Activated B cell treated with CpG ODN at 0.5 μM for 24 hours (primary cell): ENCODE measurements at regions of chr3 and their contacts with region 1.

Region 1: GRCh38 chr3:33372218-33373081 is 67.8 kb downstream of the UBP1 start:
- DNase-seq: no peak
- ATAC-seq: peak; percentile 54
- H3K4me3 Mint-ChIP-seq: no peak overlapping the region
- H3K27ac Mint-ChIP-seq: no peak overlapping the region
- H3K4me1 Mint-ChIP-seq: peaks cover 2% of the 10 kb centered on the region
- H3K27me3 Mint-ChIP-seq: peaks cover 4% of the 10 kb centered on the region
- CTCF ChIP-seq: peak; percentile 80

Region 2: DNA sequence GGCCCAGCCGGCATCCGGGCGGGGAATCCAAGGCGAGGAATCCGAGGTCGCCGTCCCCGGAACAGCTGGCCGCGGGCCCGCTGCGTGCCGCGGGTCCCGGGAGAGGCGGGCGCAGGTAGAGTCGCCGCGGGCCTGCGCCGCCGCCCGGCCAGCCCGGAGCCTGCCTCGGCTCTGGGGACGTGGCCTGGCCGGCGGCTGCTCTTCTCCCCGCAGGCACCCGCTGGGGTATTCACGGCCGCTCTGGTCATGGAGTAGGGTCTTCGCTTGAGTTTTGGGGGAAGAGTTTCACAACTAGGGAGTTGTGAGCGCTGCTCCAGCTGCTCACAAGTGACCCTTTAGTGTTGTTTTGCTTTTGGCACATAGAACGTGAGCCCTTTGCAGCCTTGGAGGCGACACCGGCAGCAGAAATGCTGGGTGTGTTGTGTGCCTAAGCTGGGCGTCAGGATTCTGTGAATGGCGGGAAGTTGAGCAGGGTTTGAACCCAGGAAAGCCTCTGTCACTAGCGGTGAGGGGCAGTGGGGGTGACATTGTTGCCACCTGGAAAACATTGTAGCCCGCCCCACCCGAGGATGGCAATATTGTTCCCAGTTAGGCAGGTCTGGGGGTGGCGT is 550.7 kb before region 1 on chr3:
- CTCF ChIA-PET with region 1: no interaction called
- POLR2A ChIA-PET with region 1: no interaction called
- intact Hi-C with region 1: no loop called
- DNase-seq: no peak
- ATAC-seq: no peak
- H3K4me3 Mint-ChIP-seq: no peak overlapping the region
- H3K27ac Mint-ChIP-seq: no peak overlapping the region
- H3K4me1 Mint-ChIP-seq: peaks cover 16% of the 10 kb centered on the region
- H3K27me3 Mint-ChIP-seq: peaks cover 33% of the 10 kb centered on the region
- CTCF ChIP-seq: no peak

Region 3: GRCh38 chr3:32947789-32948238 is 424.6 kb before region 1 on chr3:
- CTCF ChIA-PET with region 1: interaction called, 57 read pairs
- POLR2A ChIA-PET with region 1: interaction called, 3 read pairs
- intact Hi-C with region 1: loop called (anchors 1 kb)
- DNase-seq: peak; percentile 67
- ATAC-seq: peak; percentile 86
- H3K4me3 Mint-ChIP-seq: no peak overlapping the region
- H3K27ac Mint-ChIP-seq: no peak overlapping the region
- H3K4me1 Mint-ChIP-seq: peaks cover 9% of the 10 kb centered on the region
- H3K27me3 Mint-ChIP-seq: no peaks in the 10 kb centered on the region
- CTCF ChIP-seq: no peak

Region 4: DNA sequence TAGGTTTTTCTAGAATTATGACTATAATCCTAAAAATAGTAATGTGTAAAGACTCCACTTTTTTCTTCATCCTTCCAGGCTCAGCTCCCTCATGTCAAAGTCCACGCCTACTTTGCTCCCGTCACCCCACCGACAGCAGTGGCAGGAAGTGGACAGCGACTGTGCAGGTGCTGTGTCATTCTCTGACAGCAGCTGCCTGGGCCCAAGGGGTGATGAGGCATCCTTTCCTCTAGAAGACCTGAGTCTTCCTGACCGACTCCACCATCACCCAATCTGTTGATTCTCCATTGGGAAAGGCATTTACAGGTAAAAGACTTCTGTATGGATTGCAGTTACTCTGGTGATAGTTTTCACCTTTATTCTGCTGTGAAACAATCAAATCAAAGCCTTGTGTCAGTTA is 13.0 kb after region 1 on chr3:
- CTCF ChIA-PET with region 1: interaction called, 11 read pairs
- POLR2A ChIA-PET with region 1: no interaction called
- intact Hi-C with region 1: no loop called
- DNase-seq: no peak
- ATAC-seq: no peak
- H3K4me3 Mint-ChIP-seq: no peak overlapping the region
- H3K27ac Mint-ChIP-seq: no peak overlapping the region
- H3K4me1 Mint-ChIP-seq: peaks cover 3% of the 10 kb centered on the region
- H3K27me3 Mint-ChIP-seq: no peaks in the 10 kb centered on the region
- CTCF ChIP-seq: no peak